ENCODE measurements at regions of chr7 and their contacts with region 1.

Region 1: GRCh38 chr7:55124989-55125868 is 106.4 kb downstream of the EGFR start:
- DNase-seq: peak in 1 of 2 experiments; percentile 40
- ATAC-seq: peak in 1 of 2 experiments; percentile 28; a peak in 1 of 6 replicates
- H3K4me3 ChIP-seq: no peak overlapping the region
- H3K27ac ChIP-seq: peak overlapping the region in 1 of 2 experiments; percentile 59; a peak in 3 of 6 replicates
- H3K4me1 ChIP-seq: peaks cover 70% of the 10 kb centered on the region
- CTCF ChIP-seq: no peak
- EP300 ChIP-seq: no peak
- POLR2A ChIP-seq: no peak
- RAD21 ChIP-seq: 0 out of 5 replicates have a peak, but pooled peaks of 1 of the 2 experiments have one; percentile 3

Region 2: GRCh38 chr7:55104712-55105433 is 20.4 kb before region 1 on chr7:
- CTCF ChIA-PET with region 1: interaction called, 10 read pairs
- POLR2A ChIA-PET with region 1: no interaction called
- DNase-seq: no peak
- ATAC-seq: no peak
- H3K4me3 ChIP-seq: no peak overlapping the region
- H3K27ac ChIP-seq: peak overlapping the region in 1 of 2 experiments; percentile 45; a peak in 2 of 6 replicates
- H3K4me1 ChIP-seq: peaks cover 67% of the 10 kb centered on the region
- CTCF ChIP-seq: no peak
- EP300 ChIP-seq: no peak
- POLR2A ChIP-seq: no peak
- RAD21 ChIP-seq: no peak